ENCODE measurements at regions of chr5 and their contacts with region 1.

Region 1: GRCh38 chr5:100860407-100860806 is 42.7 kb downstream of the ST8SIA4 start:
- DNase-seq: peak; percentile 26
- H3K4me3 Mint-ChIP-seq: no peak overlapping the region
- H3K27ac Mint-ChIP-seq: peak overlapping the region; percentile 80
- H3K4me1 Mint-ChIP-seq: peaks cover 65% of the 10 kb centered on the region
- H3K27me3 Mint-ChIP-seq: no peaks in the 10 kb centered on the region

Region 2: DNA sequence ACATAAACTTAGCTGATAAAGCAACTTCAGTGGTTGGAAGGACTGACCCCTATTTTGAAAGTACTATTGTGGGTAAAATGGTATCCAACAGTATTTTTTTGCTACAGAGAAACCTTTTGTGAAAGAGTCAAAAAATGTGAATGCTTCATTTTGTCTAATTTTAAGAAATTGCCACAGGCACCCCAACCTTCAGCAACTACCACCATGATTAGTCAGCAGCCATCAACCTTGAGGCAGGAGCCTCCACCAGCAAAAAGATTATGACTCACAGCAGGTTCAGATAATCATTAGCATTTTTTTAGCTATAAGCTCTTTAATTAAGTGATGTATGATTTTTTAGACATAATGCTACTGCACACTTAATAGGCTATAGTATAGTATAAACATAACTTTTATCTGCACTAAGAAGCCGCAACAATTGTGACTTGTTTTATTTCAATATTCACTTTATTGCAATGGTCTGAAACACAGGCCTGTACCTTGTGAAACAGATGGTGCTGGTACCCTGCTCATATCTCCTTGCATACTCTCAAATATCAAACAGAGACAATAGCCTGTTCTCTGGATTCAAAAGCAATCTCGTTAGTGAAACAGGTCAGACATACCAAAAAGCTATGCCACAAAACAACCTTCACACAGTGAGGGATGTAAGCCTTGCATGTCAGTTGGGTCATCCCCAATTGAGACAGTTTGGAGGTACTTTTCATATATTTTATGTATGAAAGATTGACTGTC is 586.4 kb before region 1 on chr5:
- CTCF ChIA-PET with region 1: no interaction called
- POLR2A ChIA-PET with region 1: no interaction called
- intact Hi-C with region 1: no loop called
- DNase-seq: no peak
- H3K4me3 Mint-ChIP-seq: no peak overlapping the region
- H3K27ac Mint-ChIP-seq: no peak overlapping the region
- H3K4me1 Mint-ChIP-seq: no peaks in the 10 kb centered on the region
- H3K27me3 Mint-ChIP-seq: no peaks in the 10 kb centered on the region

Region 3: DNA sequence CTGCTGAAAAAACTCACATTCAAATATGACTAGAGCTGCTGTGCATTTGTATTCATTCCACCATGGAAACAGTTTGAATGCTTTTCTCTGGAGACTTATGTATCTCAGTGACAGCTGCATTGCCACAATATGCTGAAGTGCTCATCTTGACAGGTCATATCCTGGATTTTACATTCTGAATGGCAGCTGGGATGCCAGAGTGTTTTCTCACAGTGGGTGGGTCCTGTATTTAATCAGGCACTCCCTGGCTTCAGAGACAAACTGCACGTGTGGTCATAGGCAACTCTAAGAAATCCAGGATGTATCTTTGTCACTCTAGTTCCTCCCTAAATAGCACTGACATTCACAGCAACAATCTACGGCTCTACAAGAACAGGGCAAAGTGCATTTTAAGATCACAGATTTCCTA is 32.9 kb before region 1 on chr5:
- CTCF ChIA-PET with region 1: interaction called, 3 read pairs
- POLR2A ChIA-PET with region 1: no interaction called
- intact Hi-C with region 1: loop called (anchors 1 kb)
- DNase-seq: peak; percentile 23
- H3K4me3 Mint-ChIP-seq: no peak overlapping the region
- H3K27ac Mint-ChIP-seq: peak overlapping the region; percentile 79
- H3K4me1 Mint-ChIP-seq: peaks cover 43% of the 10 kb centered on the region
- H3K27me3 Mint-ChIP-seq: no peaks in the 10 kb centered on the region

Measured in activated CD4-positive, alpha-beta memory T cell treated with anti-CD3 and anti-CD28 coated beads for 36 hours (primary cell).